ENCODE measurements at regions of chr16 and their contacts with region 1.

Region 1: GRCh38 chr16:4253394-4254150 is 11.7 kb upstream of the SRL start:
- DNase-seq: peak; percentile 99
- H3K4me3 ChIP-seq: peak overlapping the region; percentile 67
- H3K27ac ChIP-seq: peak overlapping the region; percentile 86
- H3K27me3 ChIP-seq: no peaks in the 10 kb centered on the region
- CTCF ChIP-seq: no peak

Region 2: DNA sequence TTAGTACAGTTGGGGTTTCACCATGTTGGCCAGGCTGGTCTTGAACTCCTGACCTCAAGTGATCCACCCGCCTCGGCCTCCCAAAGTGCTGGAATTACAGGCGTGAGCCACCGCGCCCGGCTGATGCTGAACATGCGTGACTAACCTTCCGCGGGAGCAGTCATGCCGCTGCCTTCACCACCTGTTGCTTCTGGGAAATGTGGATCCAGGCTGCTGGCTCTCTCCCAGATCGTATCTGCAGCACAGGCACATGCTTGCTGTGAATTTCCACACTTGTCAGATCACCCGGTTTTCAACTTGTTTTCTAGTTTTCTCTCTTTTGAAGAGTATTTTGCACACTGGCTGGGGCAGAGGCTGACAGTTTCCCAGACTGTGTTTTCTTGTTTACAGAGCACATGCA is 235.2 kb before region 1 on chr16:
- CTCF ChIA-PET with region 1: interaction called, 11 read pairs
- POLR2A ChIA-PET with region 1: no interaction called
- DNase-seq: no peak
- H3K4me3 ChIP-seq: no peak overlapping the region
- H3K27ac ChIP-seq: no peak overlapping the region
- H3K27me3 ChIP-seq: no peaks in the 10 kb centered on the region
- CTCF ChIP-seq: no peak

Region 3: GRCh38 chr16:4111748-4112696 is 141.6 kb before region 1 on chr16:
- CTCF ChIA-PET with region 1: interaction called, 13 read pairs
- POLR2A ChIA-PET with region 1: interaction called, 3 read pairs
- DNase-seq: no peak
- H3K4me3 ChIP-seq: peak overlapping the region; percentile 51
- H3K27ac ChIP-seq: no peak overlapping the region
- H3K27me3 ChIP-seq: no peaks in the 10 kb centered on the region
- CTCF ChIP-seq: no peak

Region 4: DNA sequence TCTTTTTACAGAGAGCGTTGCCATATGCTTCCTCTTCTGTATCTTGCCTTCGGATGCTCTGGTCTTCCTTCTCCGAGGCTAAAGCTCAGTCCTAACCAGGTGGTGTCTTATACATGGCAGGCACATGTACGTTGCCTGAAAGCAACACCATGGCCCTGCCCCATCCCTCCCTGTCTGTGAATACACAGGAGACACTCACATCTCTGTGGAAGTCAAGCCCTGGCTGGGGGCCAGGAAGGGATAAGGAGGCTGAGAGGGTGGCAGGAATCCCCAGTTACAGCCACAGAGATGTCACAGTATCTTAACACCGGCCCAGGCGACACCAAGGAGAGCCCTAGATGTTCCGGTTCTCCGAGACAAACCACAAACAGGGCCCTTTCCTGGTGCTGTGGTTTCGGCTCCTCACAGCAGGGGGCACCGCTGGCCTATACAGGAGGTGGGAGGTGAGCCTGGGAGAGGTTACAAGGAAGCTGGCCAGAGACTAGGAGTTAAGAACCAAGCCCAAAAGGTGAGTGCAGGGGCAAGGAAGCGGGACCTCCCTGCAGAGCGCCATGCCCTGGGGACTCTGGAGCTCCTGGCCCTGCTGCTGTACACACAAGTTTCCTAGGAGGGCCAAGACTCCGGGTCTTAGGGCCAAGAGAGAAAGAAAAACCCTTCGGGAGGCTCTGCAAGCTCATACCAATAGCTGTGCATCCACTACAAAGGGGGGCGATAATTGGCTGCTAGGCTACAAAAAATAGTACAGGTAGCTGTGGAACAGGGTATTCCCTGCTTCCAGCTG is 53.4 kb before region 1 on chr16:
- CTCF ChIA-PET with region 1: interaction called, 64 read pairs
- POLR2A ChIA-PET with region 1: interaction called, 11 read pairs
- DNase-seq: peak; percentile 36
- H3K4me3 ChIP-seq: no peak overlapping the region
- H3K27ac ChIP-seq: no peak overlapping the region
- H3K27me3 ChIP-seq: no peaks in the 10 kb centered on the region
- CTCF ChIP-seq: peak; percentile 88

Region 5: DNA sequence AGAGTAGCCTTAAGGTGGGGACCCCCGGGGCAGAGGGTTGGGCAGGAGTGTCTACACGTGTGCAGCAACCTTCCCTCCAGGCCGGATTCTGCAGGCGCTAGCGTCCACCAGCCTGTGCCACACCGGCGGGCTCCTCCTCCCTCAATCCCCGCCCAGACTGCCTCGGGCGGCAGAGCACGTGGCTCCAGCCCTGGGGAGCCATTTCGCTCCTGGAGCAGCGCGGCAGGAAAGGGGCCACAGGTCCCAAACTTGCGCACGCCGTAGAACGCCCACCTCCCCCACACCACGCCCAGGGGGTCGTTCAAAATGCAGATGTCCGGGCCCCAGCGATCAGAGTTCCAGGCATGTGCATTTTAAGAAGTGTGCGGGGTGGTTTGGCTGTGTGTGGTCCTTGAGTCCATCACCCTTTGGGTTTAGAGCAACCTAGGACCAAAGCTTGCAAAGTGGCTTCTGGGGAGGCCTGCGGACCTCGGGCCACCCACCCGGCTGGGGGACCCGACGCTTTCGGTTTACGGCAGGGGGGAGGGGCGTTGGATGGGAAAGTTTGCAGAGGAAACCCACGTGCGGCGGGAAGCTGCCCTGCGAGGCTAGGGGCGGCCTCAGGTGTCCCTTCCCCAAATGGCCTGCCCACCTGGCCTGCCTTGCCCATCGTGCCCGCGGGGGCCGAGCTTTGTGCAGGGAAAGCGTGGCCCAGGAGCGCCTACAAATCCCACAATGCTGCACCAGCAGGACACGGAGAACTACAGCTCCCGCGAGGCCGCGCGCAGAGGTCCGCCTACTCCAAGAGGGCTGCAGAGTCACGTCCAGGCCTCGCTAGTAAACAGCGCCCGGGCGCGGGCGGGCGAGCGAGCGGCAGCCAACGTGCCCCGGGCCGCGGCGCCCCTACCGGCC is 17.8 kb after region 1 on chr16:
- CTCF ChIA-PET with region 1: interaction called, 20 read pairs
- POLR2A ChIA-PET with region 1: interaction called, 6 read pairs
- DNase-seq: peak; percentile 76
- H3K4me3 ChIP-seq: peak overlapping the region; percentile 84
- H3K27ac ChIP-seq: peak overlapping the region; percentile 70
- H3K27me3 ChIP-seq: no peaks in the 10 kb centered on the region
- CTCF ChIP-seq: no peak

Region 6: GRCh38 chr16:4330277-4330874 is 76.8 kb after region 1 on chr16:
- CTCF ChIA-PET with region 1: interaction called, 14 read pairs
- POLR2A ChIA-PET with region 1: interaction called, 10 read pairs
- DNase-seq: no peak
- H3K4me3 ChIP-seq: no peak overlapping the region
- H3K27ac ChIP-seq: no peak overlapping the region
- H3K27me3 ChIP-seq: no peaks in the 10 kb centered on the region
- CTCF ChIP-seq: peak; percentile 98

Region 7: DNA sequence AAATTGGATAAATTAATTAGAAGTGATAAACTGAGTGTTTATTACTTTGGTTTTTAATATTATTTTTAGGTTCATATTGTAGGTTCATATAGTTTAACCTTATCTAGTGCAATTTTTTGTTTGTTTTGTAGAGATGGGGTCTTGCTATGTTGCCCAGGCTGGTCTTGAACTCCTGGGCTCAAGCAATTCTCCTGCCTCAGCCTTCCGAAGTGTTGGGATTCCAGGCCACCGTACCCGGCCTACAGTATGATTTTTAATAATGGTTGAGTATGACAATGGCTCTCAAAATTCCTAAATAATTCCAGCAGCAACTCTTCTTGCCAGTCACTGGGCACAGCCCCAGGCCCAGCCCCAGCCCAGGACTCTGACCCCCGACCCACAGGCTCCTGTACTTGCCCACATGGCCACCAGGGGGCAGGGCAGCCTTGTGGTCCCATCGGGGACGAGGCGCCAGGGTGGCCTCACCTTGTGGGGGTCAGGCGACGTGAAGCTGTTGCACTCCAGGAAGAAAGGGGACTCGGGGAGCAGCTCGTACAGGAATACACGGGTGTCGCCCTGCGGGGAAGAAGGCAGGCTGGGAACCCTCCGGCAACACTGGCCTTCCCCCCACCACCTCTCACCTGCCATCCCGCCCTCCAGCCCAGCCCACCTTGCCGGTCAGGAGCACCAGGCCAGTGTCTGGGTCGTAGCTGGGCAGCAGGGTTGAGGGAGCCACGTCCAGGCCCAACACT is 105.4 kb after region 1 on chr16:
- CTCF ChIA-PET with region 1: no interaction called
- POLR2A ChIA-PET with region 1: no interaction called
- DNase-seq: no peak
- H3K4me3 ChIP-seq: no peak overlapping the region
- H3K27ac ChIP-seq: no peak overlapping the region
- H3K27me3 ChIP-seq: no peaks in the 10 kb centered on the region
- CTCF ChIP-seq: peak; percentile 86

Measured in AG04450 (cell line).